Activated CD8-positive, alpha-beta memory T cell treated with anti-CD3 and anti-CD28 coated beads, Interleukin-2, amount 10 ng/mL, durations not matched to agents 7 days and 5 days (primary cell): ENCODE measurements at regions of chr14 and their contacts with region 1.

Region 1: GRCh38 chr14:60164712-60165546 is at the start of gene DHRS7:
- DNase-seq: peak; percentile 81
- ATAC-seq: peak; percentile 94
- H3K4me3 Mint-ChIP-seq: peak within 1 kb of the TSS; percentile 91
- H3K27ac Mint-ChIP-seq: peak within 1 kb of the TSS; percentile 96
- H3K4me1 Mint-ChIP-seq: peaks cover 43% of the 10 kb centered on the region
- H3K27me3 Mint-ChIP-seq: no peaks in the 10 kb centered on the region
- total RNA-seq, gene DHRS7: 62.8 to 68.0 TPM

Region 2: GRCh38 chr14:59964251-59965007 is 200.5 kb before region 1 on chr14:
- CTCF ChIA-PET with region 1: interaction called, 39 read pairs
- DNase-seq: no peak
- ATAC-seq: peak; percentile 35
- H3K4me3 Mint-ChIP-seq: peak overlapping the region; percentile 72
- H3K27ac Mint-ChIP-seq: peak overlapping the region; percentile 48
- H3K4me1 Mint-ChIP-seq: peaks cover 17% of the 10 kb centered on the region
- H3K27me3 Mint-ChIP-seq: peaks cover 8% of the 10 kb centered on the region

Region 3: DNA sequence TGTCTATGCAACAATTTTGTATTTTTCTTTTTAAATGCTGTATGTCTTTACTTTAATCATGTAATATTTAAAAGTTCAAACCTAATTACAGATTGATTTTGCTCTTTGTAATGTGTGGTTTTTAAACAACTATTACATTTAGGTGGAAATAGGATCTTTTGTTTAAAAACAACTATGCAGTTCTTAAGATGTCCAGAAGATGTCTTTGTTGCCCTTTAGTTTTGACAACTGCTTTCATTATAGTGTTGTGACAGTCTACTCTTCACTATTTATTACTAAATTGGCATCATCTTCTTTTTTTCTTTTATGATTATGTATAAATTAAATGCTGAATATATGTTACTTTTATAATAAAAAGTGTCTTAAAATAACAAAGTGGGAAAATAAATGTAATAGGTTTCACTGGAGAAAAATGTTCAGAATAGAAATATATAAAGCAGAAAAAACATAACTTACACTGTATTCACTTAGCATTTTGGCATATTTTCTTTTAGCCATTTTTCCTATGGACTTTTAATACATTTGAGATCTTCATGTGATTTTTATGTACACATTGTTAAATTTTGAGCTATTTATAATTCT is 100.3 kb before region 1 on chr14:
- CTCF ChIA-PET with region 1: interaction called, 20 read pairs
- DNase-seq: no peak
- ATAC-seq: peak; percentile 45
- H3K4me3 Mint-ChIP-seq: no peak overlapping the region
- H3K27ac Mint-ChIP-seq: no peak overlapping the region
- H3K4me1 Mint-ChIP-seq: no peaks in the 10 kb centered on the region
- H3K27me3 Mint-ChIP-seq: peaks cover 17% of the 10 kb centered on the region

Region 4: GRCh38 chr14:60091550-60092530 is 73.1 kb before region 1 on chr14 and contains the start of gene PCNX4:
- CTCF ChIA-PET with region 1: interaction called, 17 read pairs
- DNase-seq: peak; percentile 97
- ATAC-seq: peak; percentile 92
- H3K4me3 Mint-ChIP-seq: peak within 1 kb of the TSS; percentile 92
- H3K27ac Mint-ChIP-seq: peak within 1 kb of the TSS; percentile 94
- H3K4me1 Mint-ChIP-seq: peaks cover 39% of the 10 kb centered on the region
- H3K27me3 Mint-ChIP-seq: no peaks in the 10 kb centered on the region
- total RNA-seq, gene PCNX4: 35.6 to 39.1 TPM

Region 5: GRCh38 chr14:60151715-60152114 is 13.2 kb before region 1 on chr14:
- CTCF ChIA-PET with region 1: interaction called, 12 read pairs
- DNase-seq: peak; percentile 83
- ATAC-seq: peak; percentile 98
- H3K4me3 Mint-ChIP-seq: no peak overlapping the region
- H3K27ac Mint-ChIP-seq: peak overlapping the region; percentile 75
- H3K4me1 Mint-ChIP-seq: peaks cover 34% of the 10 kb centered on the region
- H3K27me3 Mint-ChIP-seq: no peaks in the 10 kb centered on the region